Gastrocnemius medialis (tissue), 4 donors: ENCODE measurements at regions of chr19 and their contacts with region 1.

Region 1: GRCh38 chr19:55258828-55259539 is at the start of gene PPP6R1:
- DNase-seq: peak; percentile 95 to 99
- ATAC-seq: peak; percentile 97 to 98
- H3K4me3 ChIP-seq: peak within 1 kb of the TSS; percentile 74 to 90 (median 80)
- H3K27ac ChIP-seq: peak within 1 kb of the TSS; percentile 89 to 97 (median 94)
- H3K4me1 ChIP-seq: peaks cover 42 to 49% of the 10 kb centered on the region in 2 donors
- H3K27me3 ChIP-seq: no peaks in the 10 kb centered on the region
- CTCF ChIP-seq: peak in 2 of 5 experiments; percentile 38 to 52
- POLR2A ChIP-seq: peak; percentile 86 to 88
- total RNA-seq, gene PPP6R1: 14.6 to 47.9 (median 39.6) TPM

Region 2: DNA sequence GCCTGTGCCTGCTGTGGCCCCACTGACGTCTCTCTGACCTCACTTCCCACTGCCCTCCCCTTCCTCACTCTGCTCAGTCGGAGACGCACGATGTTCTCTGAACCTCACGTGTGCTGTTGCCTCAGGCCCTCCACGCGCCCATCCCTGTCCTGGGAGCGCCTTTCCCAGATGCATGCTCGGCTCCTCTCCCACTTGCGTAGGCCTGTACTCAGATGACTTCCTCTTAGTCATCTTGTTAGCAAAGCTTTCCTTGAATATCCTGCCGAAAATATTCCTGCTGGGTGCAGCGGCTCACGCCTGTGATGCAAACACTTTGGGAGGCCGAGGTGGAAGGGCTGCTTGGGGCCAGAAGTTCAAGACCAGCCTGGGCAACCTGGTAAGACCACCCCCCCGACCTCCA is 69.6 kb before region 1 on chr19:
- in situ Hi-C with region 1: no loop called
- intact Hi-C with region 1: no loop called
- DNase-seq: peak in 1 of 2 donors; percentile 33
- ATAC-seq: peak in 1 of 2 donors; percentile 26
- H3K4me3 ChIP-seq: no peak overlapping the region
- H3K27ac ChIP-seq: no peak overlapping the region
- H3K4me1 ChIP-seq: no peaks in the 10 kb centered on the region
- H3K27me3 ChIP-seq: peaks cover 7 to 8% (median 8%) of the 10 kb centered on the region in 3 donors
- CTCF ChIP-seq: no peak
- POLR2A ChIP-seq: no peak

Region 3: GRCh38 chr19:55206664-55207500 is 52.1 kb before region 1 on chr19:
- in situ Hi-C with region 1: no loop called
- intact Hi-C with region 1: no loop called
- DNase-seq: peak in 1 of 2 donors; percentile 17
- ATAC-seq: no peak
- H3K4me3 ChIP-seq: no peak overlapping the region
- H3K27ac ChIP-seq: no peak overlapping the region
- H3K4me1 ChIP-seq: no peaks in the 10 kb centered on the region
- H3K27me3 ChIP-seq: peaks cover 10 to 21% (median 18%) of the 10 kb centered on the region in 3 donors
- CTCF ChIP-seq: no peak
- POLR2A ChIP-seq: no peak

Region 4: GRCh38 chr19:55279770-55280643 is 21.0 kb after region 1 on chr19 and contains the start of gene HSPBP1:
- in situ Hi-C with region 1: no loop called
- intact Hi-C with region 1: loop called (anchors 1 kb)
- DNase-seq: peak; percentile 76 to 87
- ATAC-seq: peak; percentile 94 to 98
- H3K4me3 ChIP-seq: peak within 1 kb of the TSS; percentile 63 to 97 (median 82)
- H3K27ac ChIP-seq: peak within 1 kb of the TSS; percentile 70 to 86 (median 81)
- H3K4me1 ChIP-seq: peaks cover 7 to 8% of the 10 kb centered on the region in 2 donors
- H3K27me3 ChIP-seq: peaks cover 0 to 9% (median 0%) of the 10 kb centered on the region in 3 donors
- CTCF ChIP-seq: no peak
- POLR2A ChIP-seq: no peak
- total RNA-seq, gene HSPBP1: 18.5 to 41.7 (median 36.7) TPM

Region 5: DNA sequence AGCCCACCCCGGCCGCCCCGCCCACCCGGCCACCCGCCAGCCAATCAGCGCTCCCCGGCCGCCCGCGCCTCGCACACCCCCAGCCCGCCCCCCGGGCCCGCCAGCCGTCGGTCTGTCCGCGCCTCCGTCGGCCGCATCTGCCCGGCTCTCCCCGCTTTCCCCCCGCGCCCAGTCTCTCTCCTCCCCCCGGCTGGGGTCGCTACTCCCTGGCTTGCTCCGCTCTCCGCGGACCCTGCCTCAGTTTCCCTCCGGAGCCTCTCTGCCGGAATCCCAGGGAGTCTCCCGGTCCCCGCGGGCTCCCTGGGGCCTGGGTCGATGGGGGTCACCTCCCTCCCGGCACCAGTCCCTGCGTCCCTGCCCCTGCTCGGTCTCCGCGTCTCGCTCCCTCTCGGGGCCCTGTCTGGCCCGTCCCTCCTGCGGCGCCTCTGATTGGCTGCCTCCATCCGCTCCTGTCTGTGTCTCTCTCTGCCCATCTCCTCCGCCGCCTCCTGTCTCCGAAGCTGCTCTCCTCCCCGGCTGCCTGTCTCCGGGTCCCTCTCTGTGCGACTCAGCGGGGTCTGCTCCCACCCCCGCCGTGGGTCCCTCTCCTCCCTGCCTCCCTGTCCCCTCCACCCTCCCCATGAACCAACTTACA is 110.8 kb after region 1 on chr19:
- in situ Hi-C with region 1: no loop called
- intact Hi-C with region 1: no loop called
- DNase-seq: no peak
- ATAC-seq: no peak
- H3K4me3 ChIP-seq: peak overlapping the region in 1 of 4 donors; percentile 11
- H3K27ac ChIP-seq: no peak overlapping the region
- H3K4me1 ChIP-seq: no peaks in the 10 kb centered on the region
- H3K27me3 ChIP-seq: peaks cover 56 to 72% (median 68%) of the 10 kb centered on the region in 3 donors
- CTCF ChIP-seq: no peak
- POLR2A ChIP-seq: no peak

Region 6: DNA sequence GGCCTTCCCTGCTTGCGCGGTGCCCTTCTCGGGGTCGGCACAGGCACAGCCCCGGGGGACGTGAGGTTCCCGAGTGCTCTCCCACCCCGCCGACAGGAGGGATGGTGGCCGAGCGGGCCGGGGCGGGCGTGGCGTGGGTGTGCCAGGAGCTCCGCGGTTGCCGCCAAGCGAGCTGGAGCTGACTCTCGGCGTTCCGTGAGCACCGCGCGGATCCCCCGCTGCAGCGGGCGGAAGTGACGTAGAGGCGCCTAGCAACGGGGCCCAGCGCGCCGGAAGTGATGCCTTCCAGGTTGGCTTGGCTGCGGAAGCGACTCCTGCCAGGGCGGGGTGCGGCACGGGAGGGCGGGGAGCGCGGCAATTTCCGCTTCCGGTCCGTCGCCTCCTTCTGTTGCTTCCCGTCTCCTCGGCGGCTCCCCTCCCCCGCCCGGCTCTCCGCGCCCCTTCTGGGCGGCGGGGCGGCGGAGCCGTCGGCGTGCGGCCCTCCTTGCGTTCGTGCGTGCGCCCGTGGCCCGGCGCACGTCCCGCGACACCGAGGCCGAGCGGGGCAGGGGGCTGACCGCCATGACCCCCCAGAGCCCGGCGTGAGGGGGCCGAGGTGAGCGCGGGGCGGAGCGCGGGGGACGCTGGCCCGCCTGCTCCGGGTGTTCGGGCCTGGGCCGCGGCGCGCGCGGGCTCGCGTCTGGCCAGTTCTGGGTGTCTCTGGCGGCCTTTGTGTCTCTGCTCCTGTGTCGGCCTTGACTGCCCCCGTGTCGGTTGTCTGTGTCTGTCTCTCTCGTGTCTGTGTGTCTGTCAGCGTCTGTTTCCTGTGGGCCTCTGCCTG is 416.1 kb after region 1 on chr19 and contains the start of gene EPN1:
- in situ Hi-C with region 1: no loop called
- intact Hi-C with region 1: loop called (anchors 1 kb)
- DNase-seq: peak; percentile 95
- ATAC-seq: peak; percentile 93
- H3K4me3 ChIP-seq: peak within 1 kb of the TSS; percentile 76 to 89 (median 84)
- H3K27ac ChIP-seq: peak within 1 kb of the TSS; percentile 77 to 95 (median 87)
- H3K4me1 ChIP-seq: peaks cover 31 to 38% of the 10 kb centered on the region in 2 donors
- H3K27me3 ChIP-seq: no peaks in the 10 kb centered on the region
- CTCF ChIP-seq: peak in 2 of 5 experiments; percentile 7 to 8
- POLR2A ChIP-seq: peak; percentile 57 to 70
- total RNA-seq, gene EPN1: 58.7 to 214 (median 190) TPM

Region 7: GRCh38 chr19:55738302-55738701 is 479.3 kb after region 1 on chr19 and contains the start of gene NLRP9:
- in situ Hi-C with region 1: no loop called
- intact Hi-C with region 1: no loop called
- DNase-seq: no peak
- ATAC-seq: no peak
- H3K4me3 ChIP-seq: no peak within 1 kb of the TSS
- H3K27ac ChIP-seq: no peak within 1 kb of the TSS
- H3K4me1 ChIP-seq: no peaks in the 10 kb centered on the region
- H3K27me3 ChIP-seq: no peaks in the 10 kb centered on the region
- CTCF ChIP-seq: no peak
- POLR2A ChIP-seq: no peak
- total RNA-seq, gene NLRP9: not detected